Activated CD8-positive, alpha-beta memory T cell treated with anti-CD3 and anti-CD28 coated beads, Interleukin-2, amount 10 ng/mL, durations not matched to agents 7 days and 5 days (primary cell): ENCODE measurements at regions of chr14 and their contacts with region 1.

Region 1: GRCh38 chr14:106511006-106511799 is 984.8 kb downstream of the TMEM121 start:
- DNase-seq: peak; percentile 85
- ATAC-seq: peak; percentile 81
- H3K4me3 Mint-ChIP-seq: peak overlapping the region; percentile 1
- H3K27ac Mint-ChIP-seq: peak overlapping the region; percentile 80
- H3K4me1 Mint-ChIP-seq: peaks cover 65% of the 10 kb centered on the region
- H3K27me3 Mint-ChIP-seq: peaks cover 39% of the 10 kb centered on the region

Region 2: GRCh38 chr14:106436310-106436905 is 74.8 kb before region 1 on chr14:
- CTCF ChIA-PET with region 1: interaction called, 12 read pairs
- DNase-seq: peak; percentile 65
- ATAC-seq: no peak
- H3K4me3 Mint-ChIP-seq: no peak overlapping the region
- H3K27ac Mint-ChIP-seq: no peak overlapping the region
- H3K4me1 Mint-ChIP-seq: no peaks in the 10 kb centered on the region
- H3K27me3 Mint-ChIP-seq: peaks cover 15% of the 10 kb centered on the region

Region 3: DNA sequence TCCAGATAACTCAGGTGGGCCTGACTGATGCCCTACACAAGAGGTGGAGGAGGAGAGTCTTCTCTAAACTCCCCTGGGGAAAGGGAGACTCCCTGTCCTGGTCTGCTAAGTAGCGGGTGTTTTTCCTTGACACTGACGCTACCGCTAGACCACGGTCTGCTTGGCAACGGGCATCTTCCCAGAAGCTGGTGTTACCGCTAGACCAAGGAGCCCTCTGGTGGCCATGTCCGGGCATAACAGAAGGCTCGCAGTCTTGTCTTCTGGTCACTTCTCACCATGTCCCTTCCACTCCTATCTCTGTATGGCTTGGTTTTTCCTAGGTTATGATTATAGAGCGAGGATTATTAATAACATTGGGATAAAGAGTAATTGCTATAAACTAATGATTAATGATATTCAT is 19.4 kb before region 1 on chr14:
- CTCF ChIA-PET with region 1: interaction called, 111 read pairs
- DNase-seq: no peak
- ATAC-seq: no peak
- H3K4me3 Mint-ChIP-seq: no peak overlapping the region
- H3K27ac Mint-ChIP-seq: no peak overlapping the region
- H3K4me1 Mint-ChIP-seq: peaks cover 45% of the 10 kb centered on the region
- H3K27me3 Mint-ChIP-seq: no peaks in the 10 kb centered on the region

Region 4: GRCh38 chr14:106530423-106531107 is 19.4 kb after region 1 on chr14:
- CTCF ChIA-PET with region 1: interaction called, 11 read pairs
- DNase-seq: peak; percentile 63
- ATAC-seq: peak; percentile 86
- H3K4me3 Mint-ChIP-seq: no peak overlapping the region
- H3K27ac Mint-ChIP-seq: no peak overlapping the region
- H3K4me1 Mint-ChIP-seq: peaks cover 5% of the 10 kb centered on the region
- H3K27me3 Mint-ChIP-seq: peaks cover 47% of the 10 kb centered on the region

Region 5: GRCh38 chr14:106631879-106632278 is 120.7 kb after region 1 on chr14:
- CTCF ChIA-PET with region 1: no interaction called
- DNase-seq: no peak
- ATAC-seq: peak; percentile 41
- H3K4me3 Mint-ChIP-seq: no peak overlapping the region
- H3K27ac Mint-ChIP-seq: no peak overlapping the region
- H3K4me1 Mint-ChIP-seq: peaks cover 14% of the 10 kb centered on the region
- H3K27me3 Mint-ChIP-seq: peaks cover 65% of the 10 kb centered on the region